Prostate gland (tissue), 2 donors: ENCODE measurements at regions of chr1 and their contacts with region 1.

Region 1: DNA sequence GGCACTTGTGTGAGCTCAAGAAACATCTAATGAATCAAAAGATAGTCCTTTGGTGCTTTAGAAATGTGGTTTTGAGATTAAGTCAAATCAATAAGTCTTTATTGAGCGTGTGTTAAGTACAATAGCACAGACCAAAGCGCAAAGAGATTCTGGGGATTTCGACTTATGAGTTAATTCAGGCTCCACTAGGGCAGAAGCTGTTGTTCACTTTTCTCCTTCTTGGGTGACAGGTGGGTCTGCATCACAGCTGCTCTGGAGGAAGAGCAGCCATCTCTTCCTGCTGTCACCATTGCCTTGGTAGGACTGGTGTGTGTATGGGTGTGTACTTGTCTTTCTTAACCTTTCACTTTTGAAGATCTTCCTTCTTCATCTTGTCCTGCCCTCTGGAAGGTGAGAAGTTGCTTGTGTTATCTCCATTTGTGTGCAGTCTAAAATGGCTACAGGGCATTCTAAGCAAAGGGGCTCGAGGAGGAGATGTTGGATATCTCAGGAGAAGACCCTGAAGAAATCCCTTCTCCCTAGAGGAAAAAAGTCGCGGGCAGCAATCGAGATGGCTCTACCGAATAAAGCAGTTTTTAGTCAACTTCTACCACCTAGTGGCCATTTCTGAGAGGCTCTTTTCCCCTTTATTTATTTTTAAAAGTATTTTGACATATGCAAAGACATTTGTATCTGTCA is 22.9 kb upstream of the DISC1 start:
- DNase-seq: peak; percentile 18
- H3K4me3 ChIP-seq: peak overlapping the region; percentile 21 to 27
- H3K27ac ChIP-seq: no peak overlapping the region
- H3K4me1 ChIP-seq: no peaks in the 10 kb centered on the region
- H3K27me3 ChIP-seq: no peaks in the 10 kb centered on the region
- CTCF ChIP-seq: peak; percentile 40 to 79 (median 74)
- POLR2A ChIP-seq: no peak

Region 2: GRCh38 chr1:231357831-231358354 is 245.8 kb before region 1 on chr1:
- intact Hi-C with region 1: loop called (anchors 5 kb)
- DNase-seq: peak; percentile 62
- H3K4me3 ChIP-seq: no peak overlapping the region
- H3K27ac ChIP-seq: no peak overlapping the region
- H3K4me1 ChIP-seq: no peaks in the 10 kb centered on the region
- H3K27me3 ChIP-seq: no peaks in the 10 kb centered on the region
- CTCF ChIP-seq: peak; percentile 56 to 85 (median 80)
- POLR2A ChIP-seq: no peak